Pancreas (tissue), 10 donors: ENCODE measurements at regions of chr1 and their contacts with region 1.

Region 1: GRCh38 chr1:226001963-226002666 is 3.0 kb upstream of the SDE2 start:
- DNase-seq: peak in 4 of 6 donors; percentile 78 to 86 (median 84)
- ATAC-seq: peak; percentile 24 to 51 (median 34)
- H3K4me3 ChIP-seq: no peak overlapping the region
- H3K27ac ChIP-seq: peak overlapping the region; percentile 54 to 99 (median 77)
- H3K4me1 ChIP-seq: peaks cover 37 to 47% (median 39%) of the 10 kb centered on the region in 3 donors
- H3K27me3 ChIP-seq: no peaks in the 10 kb centered on the region
- CTCF ChIP-seq: no peak

Region 2: GRCh38 chr1:226051356-226051755 is 49.2 kb after region 1 on chr1:
- intact Hi-C with region 1: loop called in 1 of 3 experiments (anchors 10 kb)
- DNase-seq: no peak
- ATAC-seq: no peak
- H3K4me3 ChIP-seq: no peak overlapping the region
- H3K27ac ChIP-seq: no peak overlapping the region
- H3K4me1 ChIP-seq: no peaks in the 10 kb centered on the region
- H3K27me3 ChIP-seq: no peaks in the 10 kb centered on the region
- CTCF ChIP-seq: no peak

Region 3: GRCh38 chr1:226100436-226101391 is 98.6 kb after region 1 on chr1:
- intact Hi-C with region 1: no loop called
- DNase-seq: peak; percentile 37 to 81 (median 54)
- ATAC-seq: peak; percentile 70 to 86 (median 82)
- H3K4me3 ChIP-seq: peak overlapping the region; percentile 10 to 49 (median 20)
- H3K27ac ChIP-seq: no peak overlapping the region
- H3K4me1 ChIP-seq: no peaks in the 10 kb centered on the region
- H3K27me3 ChIP-seq: no peaks in the 10 kb centered on the region
- CTCF ChIP-seq: no peak